ENCODE measurements at regions of chr15 and their contacts with region 1.

Region 1: GRCh38 chr15:82046666-82047452 is 1.0 kb upstream of the MEX3B start:
- DNase-seq: peak; percentile 87 to 98
- H3K4me3 ChIP-seq: peak overlapping the region; percentile 72 to 98 (median 86)
- H3K27ac ChIP-seq: peak overlapping the region; percentile 72
- H3K4me1 ChIP-seq: peaks cover 6 to 18% (median 6%) of the 10 kb centered on the region in 4 experiments
- H3K27me3 ChIP-seq: peaks cover 0 to 12% (median 3%) of the 10 kb centered on the region in 4 experiments; a peak in 4 of 7 replicates
- CTCF ChIP-seq: peak; percentile 70 to 85 (median 76)
- EP300 ChIP-seq: 0 out of 3 replicates have a peak, but pooled peaks of 1 of the 2 experiments have one; percentile 2
- POLR2A ChIP-seq: no peak; a peak in 1 of 3 replicates
- RAD21 ChIP-seq: peak; percentile 61 to 74

Region 2: DNA sequence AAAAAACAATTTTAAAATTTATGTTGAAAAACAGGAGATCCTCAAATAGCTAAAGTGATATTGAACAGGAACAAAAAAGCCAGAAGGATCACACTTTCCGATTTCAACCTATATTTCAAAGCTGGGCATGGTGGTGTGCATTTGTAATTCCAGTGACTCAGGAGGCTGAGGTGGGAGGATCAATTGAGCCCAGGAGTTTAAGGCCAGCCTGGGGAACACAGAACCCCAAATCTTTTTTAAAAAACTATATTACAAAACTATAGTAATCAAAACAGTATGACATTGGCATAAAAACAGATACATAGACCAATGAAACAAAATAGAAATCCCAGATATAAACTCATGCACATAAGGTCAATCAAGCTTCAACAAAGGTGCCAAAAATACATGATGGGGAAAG is 69.4 kb before region 1 on chr15:
- CTCF ChIA-PET with region 1: no interaction called
- POLR2A ChIA-PET with region 1: no interaction called
- DNase-seq: no peak
- H3K4me3 ChIP-seq: no peak overlapping the region
- H3K27ac ChIP-seq: no peak overlapping the region
- H3K4me1 ChIP-seq: no peaks in the 10 kb centered on the region
- H3K27me3 ChIP-seq: no peaks in the 10 kb centered on the region
- CTCF ChIP-seq: no peak
- EP300 ChIP-seq: no peak
- POLR2A ChIP-seq: no peak
- RAD21 ChIP-seq: no peak

Region 3: GRCh38 chr15:81987628-81988027 is 59.2 kb before region 1 on chr15:
- CTCF ChIA-PET with region 1: no interaction called
- POLR2A ChIA-PET with region 1: no interaction called
- DNase-seq: no peak
- H3K4me3 ChIP-seq: no peak overlapping the region
- H3K27ac ChIP-seq: no peak overlapping the region
- H3K4me1 ChIP-seq: no peaks in the 10 kb centered on the region
- H3K27me3 ChIP-seq: no peaks in the 10 kb centered on the region
- CTCF ChIP-seq: no peak
- EP300 ChIP-seq: no peak
- POLR2A ChIP-seq: no peak
- RAD21 ChIP-seq: no peak

Region 4: DNA sequence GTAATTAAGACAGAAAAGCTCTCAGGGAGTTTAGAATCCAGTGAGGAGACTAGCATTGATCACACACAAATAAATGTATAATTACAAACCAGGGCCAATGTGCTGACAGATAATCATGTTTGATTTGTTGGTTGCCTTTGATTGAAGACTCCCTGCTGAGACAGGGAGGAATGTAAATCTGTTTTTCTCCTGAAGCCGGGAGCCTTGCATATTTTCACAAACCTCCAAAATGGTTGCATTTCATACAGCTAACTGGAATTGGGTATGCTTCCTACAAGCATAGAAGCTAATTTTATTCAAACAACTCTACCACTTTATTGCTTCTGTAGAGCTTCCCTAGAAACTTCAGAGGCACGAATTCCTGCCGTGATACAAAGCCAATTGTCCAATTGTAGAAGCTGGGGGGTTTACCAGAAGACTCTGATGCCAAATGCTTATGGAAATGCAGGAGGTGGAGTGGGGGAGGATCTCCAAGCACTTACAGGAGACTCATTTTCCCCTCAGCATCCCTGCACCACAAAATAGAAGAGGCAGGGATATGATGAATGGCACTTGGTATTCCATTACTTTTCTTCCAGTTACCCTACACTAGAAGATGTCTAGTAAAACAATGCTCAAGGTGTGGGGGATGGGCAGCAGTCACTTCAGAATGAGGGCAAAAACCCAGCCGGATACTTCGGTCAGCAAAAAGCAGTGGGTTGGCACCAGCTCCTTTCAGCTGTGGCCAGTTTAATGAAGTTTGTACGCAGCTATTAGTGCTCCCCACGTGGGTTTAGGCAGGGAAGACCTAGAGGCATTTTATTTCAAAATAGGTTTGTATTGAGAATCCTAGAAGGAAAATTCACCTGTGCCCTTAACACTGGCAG is 10.3 kb after region 1 on chr15:
- CTCF ChIA-PET with region 1: interaction called, 18 read pairs
- POLR2A ChIA-PET with region 1: interaction called, 19 read pairs
- DNase-seq: no peak
- H3K4me3 ChIP-seq: peak overlapping the region; percentile 31 to 63 (median 42); a peak in 5 of 8 replicates
- H3K27ac ChIP-seq: no peak overlapping the region
- H3K4me1 ChIP-seq: peaks cover 0 to 12% (median 8%) of the 10 kb centered on the region in 4 experiments; a peak in 6 of 7 replicates
- H3K27me3 ChIP-seq: peaks cover 3 to 28% (median 20%) of the 10 kb centered on the region in 4 experiments
- CTCF ChIP-seq: no peak
- EP300 ChIP-seq: no peak
- POLR2A ChIP-seq: no peak
- RAD21 ChIP-seq: no peak

Region 5: DNA sequence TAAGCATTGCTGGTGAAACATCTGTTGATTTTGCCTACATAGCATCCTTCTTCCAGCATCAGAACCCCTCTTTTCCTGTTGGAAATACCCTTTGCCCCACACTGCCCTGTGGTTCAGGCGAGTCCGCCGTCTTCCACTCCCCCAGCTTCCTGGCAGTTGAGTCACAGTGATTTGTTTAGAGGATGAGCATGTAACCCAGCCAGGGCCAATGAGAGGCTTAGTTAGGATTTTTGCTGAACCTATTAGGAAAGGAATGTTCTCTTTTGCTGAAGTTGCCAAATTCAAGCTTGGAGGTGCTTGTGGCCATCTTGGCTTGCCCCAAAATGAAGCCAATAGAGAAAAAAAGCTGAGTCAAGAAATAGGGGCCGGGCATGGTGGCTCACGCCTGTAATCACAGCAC is 18.0 kb after region 1 on chr15:
- CTCF ChIA-PET with region 1: interaction called, 18 read pairs
- POLR2A ChIA-PET with region 1: interaction called, 12 read pairs
- DNase-seq: no peak
- H3K4me3 ChIP-seq: no peak overlapping the region
- H3K27ac ChIP-seq: no peak overlapping the region
- H3K4me1 ChIP-seq: peaks cover 2 to 5% (median 3%) of the 10 kb centered on the region in 4 experiments; a peak in 4 of 7 replicates
- H3K27me3 ChIP-seq: peaks cover 2 to 27% (median 22%) of the 10 kb centered on the region in 4 experiments
- CTCF ChIP-seq: no peak
- EP300 ChIP-seq: no peak
- POLR2A ChIP-seq: no peak
- RAD21 ChIP-seq: no peak